Cardiac septum (tissue), 1 donor: ENCODE measurements at regions of chr1 and their contacts with region 1.

Region 1: DNA sequence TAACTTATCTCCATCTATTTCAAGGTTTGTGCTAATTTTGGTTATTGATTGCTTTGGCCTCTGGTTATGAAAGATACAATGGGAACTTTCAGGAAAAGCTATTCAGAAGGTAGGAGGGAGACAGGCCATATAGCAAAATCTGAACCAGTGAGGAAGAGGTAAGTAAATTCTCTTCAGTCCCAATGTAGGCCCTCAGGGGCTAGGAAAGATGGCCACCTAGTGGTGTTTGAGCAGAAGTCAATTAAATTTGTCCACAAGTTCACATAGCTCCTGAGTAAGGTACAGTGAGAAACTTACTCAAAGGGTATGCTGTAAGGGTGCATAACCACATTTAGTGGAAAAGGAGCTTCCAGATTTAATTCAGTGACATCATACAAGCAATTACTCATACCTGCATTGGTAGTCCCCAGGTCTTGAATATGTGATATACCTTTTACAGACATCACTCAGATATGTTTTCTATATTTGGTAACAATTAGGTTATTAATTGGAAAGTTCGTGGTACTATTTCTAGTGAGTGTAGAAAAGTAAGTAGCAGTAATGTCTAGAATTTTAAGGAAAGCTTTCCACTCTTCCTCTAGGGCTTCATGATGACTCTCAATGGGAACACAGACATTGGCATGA is 21.4 kb upstream of the FMO1 start:
- DNase-seq: no peak

Region 2: GRCh38 chr1:170967042-170967910 is 259.6 kb before region 1 on chr1:
- intact Hi-C with region 1: loop called (anchors 1 kb)
- DNase-seq: no peak